ENCODE measurements at regions of chr10 and their contacts with region 1.

Region 1: DNA sequence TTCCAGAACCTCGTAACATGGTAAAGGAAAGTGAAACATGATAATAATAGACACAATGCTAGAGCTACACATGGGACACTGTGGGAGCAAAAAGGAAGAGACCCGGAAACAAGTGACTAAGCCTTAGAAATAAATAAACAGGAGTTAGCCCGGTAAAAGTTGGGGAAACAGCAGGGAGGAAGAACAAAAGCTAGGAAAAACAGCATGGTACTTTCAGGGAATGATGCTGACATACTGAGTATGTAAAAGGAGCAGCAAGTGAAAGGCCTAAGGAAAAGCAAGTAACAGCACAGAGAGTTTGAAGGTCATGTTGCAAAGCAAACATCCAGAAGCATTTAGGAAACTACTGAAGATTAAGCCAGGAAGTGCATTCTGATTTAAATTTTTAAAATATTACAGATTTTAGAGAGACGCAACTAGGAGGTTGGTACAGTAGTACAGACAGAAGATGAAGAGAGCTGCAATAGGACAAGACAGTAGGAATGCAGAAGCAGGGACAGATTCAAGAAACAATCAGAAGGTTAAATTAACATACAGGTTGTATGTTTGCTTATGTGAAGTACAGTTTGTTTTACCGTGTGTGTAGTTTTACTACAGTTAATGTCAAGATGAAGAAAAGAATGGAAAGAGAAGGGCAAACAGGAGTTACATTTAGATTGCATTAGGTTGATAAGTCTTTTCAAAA is 63.7 kb downstream of the ARHGAP12 start:
- DNase-seq: no peak
- H3K4me3 Mint-ChIP-seq: peak overlapping the region; percentile 56
- H3K27ac Mint-ChIP-seq: peak overlapping the region; percentile 55
- H3K4me1 Mint-ChIP-seq: peaks cover 35% of the 10 kb centered on the region
- H3K27me3 Mint-ChIP-seq: no peaks in the 10 kb centered on the region
- CTCF ChIP-seq: no peak

Region 2: DNA sequence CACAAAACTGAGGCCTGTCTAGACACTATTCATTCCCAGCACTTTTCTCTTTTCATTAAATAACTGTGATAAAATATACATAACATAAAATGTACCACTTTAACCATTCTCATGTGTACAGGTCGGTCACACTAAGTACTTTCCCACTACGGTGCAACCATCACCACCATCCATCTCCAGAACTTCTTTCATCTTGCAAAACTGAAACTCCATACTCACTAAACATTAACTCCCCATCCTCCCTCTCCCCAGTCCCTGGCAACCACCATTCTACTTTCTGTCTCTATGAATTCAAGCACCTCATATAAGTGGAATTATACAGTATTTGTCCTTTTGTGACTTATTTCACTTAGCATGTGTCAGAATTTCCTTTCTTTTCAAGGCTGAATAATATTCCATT is 10.6 kb after region 1 on chr10:
- CTCF ChIA-PET with region 1: interaction called, 3 read pairs
- intact Hi-C with region 1: loop called (anchors 2 kb)
- DNase-seq: no peak
- H3K4me3 Mint-ChIP-seq: no peak overlapping the region
- H3K27ac Mint-ChIP-seq: no peak overlapping the region
- H3K4me1 Mint-ChIP-seq: peaks cover 49% of the 10 kb centered on the region
- H3K27me3 Mint-ChIP-seq: no peaks in the 10 kb centered on the region
- CTCF ChIP-seq: no peak

Region 3: DNA sequence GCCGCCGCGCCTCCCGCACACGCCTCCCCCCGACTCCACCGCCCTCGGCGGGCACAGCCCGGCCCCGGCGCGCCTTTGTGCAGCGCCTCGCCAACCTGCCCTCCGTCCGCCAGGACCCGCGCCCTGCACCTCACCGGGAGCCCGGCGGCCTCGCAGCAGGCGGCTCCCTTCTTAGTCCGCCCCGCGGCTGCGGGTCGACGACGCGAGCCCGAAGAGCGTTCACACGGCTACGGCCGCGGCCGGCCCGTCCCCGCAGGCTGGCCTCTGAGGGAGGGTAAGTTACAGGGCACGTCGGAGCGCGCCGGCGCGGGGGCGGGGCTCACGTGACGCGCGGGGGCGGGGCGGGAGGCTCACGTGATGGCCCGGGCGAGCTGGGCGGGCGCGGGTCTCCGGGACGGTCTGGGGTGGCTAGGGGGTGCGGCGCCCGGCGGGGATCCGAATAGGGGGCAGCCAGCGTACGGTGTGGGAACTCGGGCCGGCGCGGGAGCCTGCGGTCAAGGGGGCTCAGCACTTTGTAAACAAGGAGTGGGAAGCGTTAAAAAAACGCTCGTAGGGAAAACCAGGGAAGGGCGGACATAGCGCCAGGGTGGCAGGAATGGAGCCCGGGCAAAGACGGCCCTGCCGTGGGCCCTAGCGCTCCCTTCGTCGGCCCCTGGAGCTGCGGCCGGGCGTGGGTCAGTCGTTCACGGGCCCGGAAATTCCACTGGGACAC is 63.7 kb after region 1 on chr10 and contains the start of gene ARHGAP12:
- CTCF ChIA-PET with region 1: interaction called, 14 read pairs
- intact Hi-C with region 1: loop called (anchors 2 kb)
- DNase-seq: peak; percentile 95
- H3K4me3 Mint-ChIP-seq: peak within 1 kb of the TSS; percentile 89
- H3K27ac Mint-ChIP-seq: peak within 1 kb of the TSS; percentile 90
- H3K4me1 Mint-ChIP-seq: peaks cover 43% of the 10 kb centered on the region
- H3K27me3 Mint-ChIP-seq: no peaks in the 10 kb centered on the region
- CTCF ChIP-seq: no peak
- total RNA-seq, gene ARHGAP12: 56.0 and 60.7 TPM in 2 replicates

Region 4: DNA sequence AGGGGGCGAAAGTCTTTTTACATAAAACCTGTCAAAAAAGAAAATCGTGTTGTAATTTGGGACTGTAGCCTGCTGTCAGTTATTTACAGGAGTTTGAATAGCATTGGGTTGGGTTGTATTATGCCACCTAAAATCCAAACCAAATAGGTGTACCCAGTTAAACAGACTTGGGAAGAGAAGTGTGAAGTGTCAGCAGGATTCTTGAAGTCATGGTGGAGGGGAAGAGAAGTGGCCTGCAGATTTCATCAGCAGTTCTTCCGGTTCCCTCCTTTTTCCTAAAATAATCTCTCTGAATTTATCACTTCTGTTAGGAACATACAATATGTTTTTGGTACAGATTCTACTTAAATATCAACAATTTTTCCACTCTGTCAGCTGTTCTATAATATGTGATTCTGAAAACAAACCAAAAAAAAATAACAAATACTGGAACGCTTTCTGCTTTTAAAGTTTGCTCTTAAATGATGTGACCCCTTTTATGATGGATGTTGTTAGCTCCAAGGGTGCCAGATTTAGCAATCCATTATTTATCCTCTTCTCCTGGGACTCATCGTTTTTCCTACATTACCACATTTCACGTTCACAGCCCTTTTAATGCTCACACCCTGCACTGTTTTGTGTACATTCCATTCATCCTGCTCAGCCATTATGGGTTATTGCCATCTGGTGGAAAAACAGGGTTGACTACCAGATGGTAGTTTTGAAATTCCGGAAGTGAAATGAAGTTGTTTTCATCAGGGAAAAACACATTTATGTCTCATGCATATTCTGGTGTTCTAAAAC is 82.4 kb after region 1 on chr10:
- CTCF ChIA-PET with region 1: interaction called, 13 read pairs
- intact Hi-C with region 1: loop called (anchors 1 kb)
- DNase-seq: peak; percentile 53
- H3K4me3 Mint-ChIP-seq: peak overlapping the region; percentile 31
- H3K27ac Mint-ChIP-seq: peak overlapping the region; percentile 78
- H3K4me1 Mint-ChIP-seq: peaks cover 51% of the 10 kb centered on the region
- H3K27me3 Mint-ChIP-seq: no peaks in the 10 kb centered on the region
- CTCF ChIP-seq: no peak